ENCODE measurements at regions of chr7 and their contacts with region 1.

Region 1: GRCh38 chr7:22156205-22156604 is 200.7 kb downstream of the RAPGEF5 start:
- DNase-seq: peak; percentile 74
- H3K4me3 ChIP-seq: no peak overlapping the region
- H3K27ac ChIP-seq: peak overlapping the region; percentile 3
- H3K4me1 ChIP-seq: peaks cover 9% of the 10 kb centered on the region
- H3K27me3 ChIP-seq: no peaks in the 10 kb centered on the region
- CTCF ChIP-seq: no peak
- POLR2A ChIP-seq: no peak

Region 2: GRCh38 chr7:22127835-22128527 is 28.2 kb before region 1 on chr7:
- CTCF ChIA-PET with region 1: interaction called, 3 read pairs
- POLR2A ChIA-PET with region 1: no interaction called
- dilution Hi-C with region 1: no loop called
- intact Hi-C with region 1: loop called (anchors 1 kb)
- DNase-seq: peak; percentile 97
- H3K4me3 ChIP-seq: no peak overlapping the region
- H3K27ac ChIP-seq: peak overlapping the region; percentile 91
- H3K4me1 ChIP-seq: peaks cover 55% of the 10 kb centered on the region
- H3K27me3 ChIP-seq: no peaks in the 10 kb centered on the region
- CTCF ChIP-seq: no peak
- POLR2A ChIP-seq: no peak

Region 3: GRCh38 chr7:22173685-22174573 is 17.7 kb after region 1 on chr7:
- CTCF ChIA-PET with region 1: interaction called, 10 read pairs
- POLR2A ChIA-PET with region 1: no interaction called
- dilution Hi-C with region 1: no loop called
- intact Hi-C with region 1: no loop called
- DNase-seq: peak; percentile 44
- H3K4me3 ChIP-seq: no peak overlapping the region
- H3K27ac ChIP-seq: no peak overlapping the region
- H3K4me1 ChIP-seq: no peaks in the 10 kb centered on the region
- H3K27me3 ChIP-seq: no peaks in the 10 kb centered on the region
- CTCF ChIP-seq: no peak
- POLR2A ChIP-seq: no peak

Region 4: DNA sequence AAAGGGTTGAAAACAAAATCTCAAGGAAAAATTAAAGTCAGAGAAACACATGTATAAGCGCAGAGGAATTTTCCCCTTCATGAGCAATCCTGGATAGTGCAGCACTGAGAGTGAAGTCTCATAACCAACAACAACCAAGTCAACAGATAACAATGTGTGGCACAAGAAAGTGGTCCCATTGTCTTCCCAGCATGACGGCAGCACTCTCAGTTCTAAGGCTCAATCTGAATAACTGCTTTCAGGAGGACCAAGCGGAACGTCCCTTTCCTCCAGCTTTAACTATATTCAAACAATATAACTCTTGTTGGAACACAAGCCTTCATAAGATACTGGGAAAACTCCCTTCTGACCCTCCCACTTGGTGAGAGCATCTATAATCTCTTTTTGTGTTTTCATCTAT is 62.8 kb after region 1 on chr7:
- CTCF ChIA-PET with region 1: no interaction called
- POLR2A ChIA-PET with region 1: no interaction called
- dilution Hi-C with region 1: no loop called
- intact Hi-C with region 1: no loop called
- DNase-seq: peak; percentile 87
- H3K4me3 ChIP-seq: peak overlapping the region; percentile 41 to 85 (median 73)
- H3K27ac ChIP-seq: peak overlapping the region; percentile 98
- H3K4me1 ChIP-seq: peaks cover 60% of the 10 kb centered on the region
- H3K27me3 ChIP-seq: no peaks in the 10 kb centered on the region
- CTCF ChIP-seq: no peak
- POLR2A ChIP-seq: peak; percentile 63

Region 5: DNA sequence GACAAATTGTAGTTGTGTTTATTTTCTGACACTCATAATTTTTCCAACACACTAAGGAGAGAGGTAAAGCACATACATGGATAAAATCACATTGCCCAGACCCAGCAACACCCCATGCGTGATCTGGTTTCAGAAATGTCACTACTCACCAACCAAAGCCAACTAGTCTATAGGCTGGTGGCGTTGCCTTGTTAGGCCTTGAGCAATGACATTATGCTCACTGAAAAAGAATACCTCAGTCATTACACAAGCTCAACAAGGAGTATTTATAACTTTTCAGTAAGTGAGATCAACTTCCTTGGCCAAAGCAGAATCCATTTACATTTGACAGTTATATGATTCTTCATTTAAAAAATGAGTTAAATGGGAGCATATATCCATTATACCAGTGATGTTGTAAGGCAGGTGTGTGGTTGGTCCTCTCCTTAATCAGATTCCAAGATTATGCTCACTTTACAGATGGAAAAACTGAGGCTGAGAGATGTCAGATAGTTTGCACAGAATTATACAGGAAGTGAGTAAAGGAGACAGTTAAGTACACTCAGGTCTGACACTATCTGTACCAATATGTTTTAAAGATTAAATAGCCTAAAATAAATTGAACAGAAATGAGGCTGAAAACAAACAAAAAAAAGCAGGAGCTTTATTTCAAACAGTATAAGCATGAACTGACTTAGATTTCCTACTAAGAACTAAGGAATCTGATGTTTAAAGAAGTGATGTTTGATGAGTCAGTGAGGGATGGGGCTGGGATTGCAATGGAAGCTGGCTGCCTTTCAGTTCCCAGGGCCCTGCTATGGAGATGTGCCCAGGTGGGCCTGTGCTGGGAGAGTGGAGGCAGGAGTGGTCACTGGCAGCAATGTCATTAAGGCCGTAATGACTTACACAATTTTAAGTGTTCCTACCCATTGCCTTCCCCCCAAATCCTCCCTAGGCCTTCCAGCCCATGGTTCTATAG is 82.4 kb after region 1 on chr7:
- CTCF ChIA-PET with region 1: no interaction called
- POLR2A ChIA-PET with region 1: no interaction called
- dilution Hi-C with region 1: no loop called
- intact Hi-C with region 1: no loop called
- DNase-seq: no peak
- H3K4me3 ChIP-seq: no peak overlapping the region
- H3K27ac ChIP-seq: no peak overlapping the region
- H3K4me1 ChIP-seq: no peaks in the 10 kb centered on the region
- H3K27me3 ChIP-seq: no peaks in the 10 kb centered on the region
- CTCF ChIP-seq: no peak
- POLR2A ChIP-seq: no peak

Region 6: GRCh38 chr7:22726345-22727185 is 570.4 kb after region 1 on chr7:
- CTCF ChIA-PET with region 1: no interaction called
- POLR2A ChIA-PET with region 1: no interaction called
- dilution Hi-C with region 1: no loop called
- intact Hi-C with region 1: no loop called
- DNase-seq: peak; percentile 84
- H3K4me3 ChIP-seq: peak overlapping the region; percentile 21 to 84 (median 42)
- H3K27ac ChIP-seq: peak overlapping the region; percentile 93
- H3K4me1 ChIP-seq: peaks cover 51% of the 10 kb centered on the region
- H3K27me3 ChIP-seq: no peaks in the 10 kb centered on the region
- CTCF ChIP-seq: peak; percentile 56 to 62
- POLR2A ChIP-seq: no peak

Measured in endothelial cell of umbilical vein (primary cell).